Left colon (tissue), 2 donors: ENCODE measurements at regions of chr3 and their contacts with region 1.

Region 1: DNA sequence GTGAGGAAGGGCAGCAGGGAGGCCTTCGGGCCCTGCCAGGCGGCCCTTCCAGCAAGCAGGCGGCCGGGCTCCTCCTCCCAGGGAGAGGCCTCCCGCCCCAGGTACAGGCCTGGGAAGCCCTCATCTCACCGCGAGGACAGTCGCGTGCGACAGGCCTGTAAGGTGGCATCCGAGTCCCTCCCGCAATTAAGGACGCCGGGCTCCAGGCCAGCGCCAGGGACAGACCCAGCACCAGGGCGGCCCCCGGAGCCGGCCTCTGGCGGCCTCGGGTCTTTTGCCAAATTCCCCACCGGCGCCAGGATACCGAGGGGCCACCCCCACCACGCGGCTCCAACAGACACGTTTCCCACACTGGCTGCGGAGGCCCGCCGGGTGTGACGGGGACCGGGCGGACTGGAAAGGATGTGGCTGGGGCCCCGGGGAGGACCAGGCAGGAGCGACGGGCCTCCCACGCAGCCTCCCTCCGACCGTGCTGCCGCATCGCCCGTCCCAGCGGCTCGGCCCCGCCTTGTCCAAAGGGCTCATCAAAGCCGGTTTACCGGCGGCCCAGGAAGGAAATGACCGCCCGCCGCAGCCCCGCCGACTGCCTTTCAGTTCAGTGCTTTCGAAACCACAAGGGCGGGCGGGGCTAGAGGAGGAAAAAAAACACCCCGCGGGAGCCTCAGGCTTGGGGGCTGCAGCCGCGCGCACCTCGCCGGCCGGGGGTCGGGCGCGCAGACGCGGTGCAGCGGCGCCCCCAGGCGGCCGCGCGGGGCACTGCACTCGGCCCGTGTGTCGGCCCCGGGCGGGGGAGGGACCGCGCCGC is 11.3 kb downstream of the XXYLT1 start:
- DNase-seq: peak; percentile 92 to 94
- ATAC-seq: peak; percentile 78

Region 2: DNA sequence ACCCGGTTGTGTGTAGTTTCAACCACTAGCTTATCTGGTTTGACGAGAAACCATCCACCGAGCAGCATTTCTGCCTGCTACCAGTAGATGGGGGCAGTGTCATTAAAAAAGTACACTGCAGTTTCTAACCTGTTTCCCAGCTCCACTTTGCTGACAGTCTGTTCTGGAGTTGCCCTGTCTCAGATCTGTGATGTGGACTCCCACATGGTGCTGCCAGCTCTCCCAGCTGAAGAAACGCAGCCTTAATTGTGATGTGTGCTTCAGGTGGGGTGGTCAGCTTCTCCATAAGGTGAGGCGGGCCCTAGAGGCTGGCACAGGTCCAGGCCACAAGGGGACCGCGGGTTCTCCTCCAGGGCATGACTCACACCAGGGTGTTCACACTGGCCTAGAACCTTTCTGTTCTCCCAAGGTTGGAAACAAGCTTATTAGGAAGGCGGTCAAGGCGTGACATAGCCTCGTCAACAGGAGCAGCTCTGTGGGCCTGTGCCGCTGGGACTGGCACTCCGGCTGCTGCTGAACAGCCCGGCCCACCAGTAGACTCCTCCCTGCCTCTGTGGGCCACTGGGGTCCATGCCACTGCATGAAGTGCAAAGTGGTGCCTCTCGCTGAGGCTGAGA is 576.9 kb before region 1 on chr3:
- intact Hi-C with region 1: loop called (anchors 5 to 10 kb)
- DNase-seq: peak; percentile 72 to 74
- ATAC-seq: peak; percentile 59

Region 3: GRCh38 chr3:195154793-195155535 is 104.7 kb before region 1 on chr3:
- intact Hi-C with region 1: loop called in 1 of 2 experiments (anchors 10 kb)
- DNase-seq: peak; percentile 77 to 89
- ATAC-seq: peak; percentile 68

Region 4: GRCh38 chr3:195226900-195227447 is 32.7 kb before region 1 on chr3:
- intact Hi-C with region 1: no loop called
- DNase-seq: no peak
- ATAC-seq: no peak